ENCODE measurements at regions of chr4 and their contacts with region 1.

Region 1: GRCh38 chr4:5705647-5706320 is 2.6 kb downstream of the EVC2 start:
- DNase-seq: no peak
- H3K4me3 Mint-ChIP-seq: no peak overlapping the region
- H3K27ac Mint-ChIP-seq: no peak overlapping the region
- H3K4me1 Mint-ChIP-seq: peaks cover 8% of the 10 kb centered on the region
- H3K27me3 Mint-ChIP-seq: peaks cover 20% of the 10 kb centered on the region

Region 2: DNA sequence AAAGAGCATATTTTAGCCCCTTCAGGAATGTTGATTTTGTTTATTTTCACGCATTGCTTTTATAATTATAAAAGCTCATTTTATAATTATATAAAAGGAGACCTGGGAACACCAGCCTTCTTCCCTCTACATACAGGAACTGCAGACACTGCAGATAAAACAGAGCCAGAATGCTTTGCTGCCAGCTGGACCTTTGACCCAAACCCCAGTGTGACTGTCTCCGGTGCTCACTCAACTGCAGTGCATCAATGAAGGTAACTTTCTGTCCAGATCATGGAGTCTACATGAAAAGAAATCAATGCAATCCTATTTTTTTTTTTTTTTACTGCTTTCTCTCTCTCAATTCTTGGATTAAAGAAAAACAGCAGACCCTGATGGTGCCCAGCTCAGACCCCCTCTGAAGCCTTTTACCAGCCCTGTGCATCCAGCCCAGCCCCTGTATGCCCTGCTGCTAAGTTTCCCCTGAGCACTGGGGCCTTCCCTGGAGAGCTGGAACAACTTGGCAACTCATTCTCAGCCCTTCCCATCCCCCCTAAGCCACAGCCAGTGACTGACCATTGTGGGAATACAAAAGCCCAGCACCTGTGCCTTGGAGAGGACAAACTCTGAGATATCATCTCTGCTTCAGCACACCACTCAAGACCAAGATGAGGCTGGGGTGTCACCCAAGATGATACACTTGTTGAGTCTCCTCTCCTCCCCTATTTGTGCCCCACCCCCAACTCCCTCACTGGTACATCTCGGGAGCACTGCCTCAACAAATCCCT is 179.5 kb before region 1 on chr4:
- intact Hi-C with region 1: no loop called
- DNase-seq: no peak
- H3K4me3 Mint-ChIP-seq: no peak overlapping the region
- H3K27ac Mint-ChIP-seq: no peak overlapping the region
- H3K4me1 Mint-ChIP-seq: no peaks in the 10 kb centered on the region
- H3K27me3 Mint-ChIP-seq: no peaks in the 10 kb centered on the region

Region 3: DNA sequence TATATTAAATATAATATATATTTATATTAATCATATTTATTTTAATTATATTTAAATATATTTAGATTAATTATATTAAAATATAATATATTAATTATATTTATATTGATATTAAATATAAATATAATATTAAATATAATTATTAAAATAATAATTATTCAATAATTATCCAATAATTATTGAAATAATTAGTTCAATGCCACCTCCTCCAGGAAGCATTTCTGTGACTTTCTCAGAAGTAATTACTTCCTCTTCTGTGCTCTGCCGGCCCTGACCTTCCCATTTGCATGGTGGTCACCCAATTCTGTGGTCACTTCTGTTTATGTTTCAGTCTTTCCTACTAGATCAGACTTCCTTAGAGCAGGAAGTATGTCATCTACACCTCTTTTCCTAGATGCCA is 43.2 kb before region 1 on chr4:
- intact Hi-C with region 1: loop called (anchors 2 kb)
- DNase-seq: no peak
- H3K4me3 Mint-ChIP-seq: no peak overlapping the region
- H3K27ac Mint-ChIP-seq: no peak overlapping the region
- H3K4me1 Mint-ChIP-seq: no peaks in the 10 kb centered on the region
- H3K27me3 Mint-ChIP-seq: peaks cover 3% of the 10 kb centered on the region

Region 4: GRCh38 chr4:5940470-5941203 is 234.9 kb after region 1 on chr4:
- intact Hi-C with region 1: no loop called
- DNase-seq: no peak
- H3K4me3 Mint-ChIP-seq: no peak overlapping the region
- H3K27ac Mint-ChIP-seq: no peak overlapping the region
- H3K4me1 Mint-ChIP-seq: peaks cover 6% of the 10 kb centered on the region
- H3K27me3 Mint-ChIP-seq: no peaks in the 10 kb centered on the region

Measured in activated T-helper 1 cell treated with anti-CD3 and anti-CD28 coated beads, Interleukin-12 subunit alpha, Interleukin-12 subunit beta, Interleukin-2, Interleukin-4 antibody, amounts not matched to agents 30 ng/mL and 10 ng/mL and 1 ng/mL, durations not matched to agents 14 hours and 24 hours and 36 hours (primary cell).